A549 (cell line): ENCODE measurements at regions of chr1 and their contacts with region 1.

Region 1: GRCh38 chr1:204506961-204507387 is 9.2 kb upstream of the MDM4 start:
- DNase-seq: peak; percentile 35 to 93
- ATAC-seq: peak; percentile 79 to 87
- H3K4me3 ChIP-seq: peak overlapping the region; percentile 53
- H3K27ac ChIP-seq: peak overlapping the region; percentile 78 to 89
- H3K4me1 ChIP-seq: peaks cover 21% of the 10 kb centered on the region
- CTCF ChIP-seq: no peak
- EP300 ChIP-seq: no peak
- POLR2A ChIP-seq: no peak
- RAD21 ChIP-seq: no peak

Region 2: DNA sequence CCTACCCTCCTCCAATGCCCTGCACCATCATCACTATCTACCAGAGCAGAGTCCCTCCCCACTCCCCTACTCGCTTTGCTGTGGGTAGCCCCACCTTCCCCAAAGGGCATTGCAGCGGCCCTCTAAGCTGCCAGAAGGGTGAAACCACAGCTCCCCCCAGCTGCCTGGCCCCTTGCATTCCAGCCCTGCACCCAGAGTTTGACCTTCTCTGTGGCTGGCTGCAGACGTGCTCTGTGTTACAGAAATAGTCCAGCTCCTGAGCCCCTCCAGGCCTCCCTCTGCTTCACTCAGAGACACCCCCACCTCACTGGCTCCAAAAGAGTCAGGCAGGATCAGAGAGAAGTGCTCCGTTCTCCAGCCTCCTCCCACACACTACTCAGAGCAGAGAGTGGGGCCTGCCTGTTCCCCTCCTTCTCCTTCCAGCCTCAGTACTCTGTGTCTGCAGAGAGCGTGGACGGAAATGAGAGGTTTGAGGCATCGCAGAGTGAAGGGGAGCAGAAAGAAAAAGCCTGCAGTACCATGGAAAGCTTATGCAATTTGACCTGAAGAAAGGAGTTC is 210.5 kb before region 1 on chr1:
- CTCF ChIA-PET with region 1: no interaction called
- POLR2A ChIA-PET with region 1: no interaction called
- DNase-seq: no peak
- ATAC-seq: peak in 1 of 2 experiments; percentile 47; a peak in 3 of 6 replicates
- H3K4me3 ChIP-seq: no peak overlapping the region
- H3K27ac ChIP-seq: peak overlapping the region; percentile 35 to 78
- H3K4me1 ChIP-seq: peaks cover 42% of the 10 kb centered on the region
- CTCF ChIP-seq: no peak
- EP300 ChIP-seq: no peak
- POLR2A ChIP-seq: no peak
- RAD21 ChIP-seq: no peak; a peak in 1 of 5 replicates

Region 3: DNA sequence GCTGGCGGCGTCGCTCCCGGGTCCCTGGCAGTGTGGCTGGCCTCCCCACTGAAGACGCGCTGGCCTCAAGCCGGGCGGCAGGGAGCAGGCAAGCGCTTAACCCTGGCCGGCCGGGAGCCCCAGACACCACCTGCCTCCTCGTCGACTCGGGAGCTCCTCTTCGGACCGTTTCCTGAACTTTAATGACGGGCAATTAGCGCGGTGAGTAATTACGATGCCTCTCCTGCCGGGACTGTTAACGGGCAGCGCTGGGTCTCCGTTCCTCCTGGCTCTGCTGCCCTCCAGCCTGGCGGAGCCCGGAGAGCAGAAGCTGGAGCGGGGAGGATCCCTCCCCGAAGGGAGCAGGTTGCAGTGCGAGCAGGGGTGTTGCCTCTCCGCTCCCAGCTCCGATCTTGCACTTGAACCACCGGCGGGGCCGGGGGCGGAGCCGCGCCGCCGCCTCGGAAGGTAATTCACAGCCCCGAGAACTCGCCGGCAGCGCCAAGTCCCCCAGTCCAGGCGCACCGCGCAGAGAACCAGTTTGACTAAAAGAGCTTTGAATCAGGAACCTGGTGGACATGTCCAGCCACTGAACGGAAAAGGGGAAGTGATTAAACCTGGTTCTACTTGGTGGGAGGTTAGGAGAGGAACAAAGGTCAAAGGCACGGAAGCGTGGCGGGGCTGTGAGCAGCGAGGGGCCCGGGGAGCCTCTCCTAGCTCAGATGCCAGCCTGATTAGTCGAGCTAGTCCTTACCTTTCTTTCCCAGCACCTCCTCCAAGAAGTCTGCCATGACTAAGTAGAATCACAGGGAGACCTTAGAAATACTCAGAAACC is 129.0 kb before region 1 on chr1:
- CTCF ChIA-PET with region 1: interaction called, 22 read pairs
- POLR2A ChIA-PET with region 1: interaction called, 13 read pairs
- DNase-seq: peak; percentile 59 to 64
- ATAC-seq: peak; percentile 79 to 80
- H3K4me3 ChIP-seq: peak overlapping the region; percentile 76
- H3K27ac ChIP-seq: peak overlapping the region; percentile 94 to 95
- H3K4me1 ChIP-seq: peaks cover 33% of the 10 kb centered on the region
- CTCF ChIP-seq: no peak
- EP300 ChIP-seq: no peak
- POLR2A ChIP-seq: peak; percentile 42
- RAD21 ChIP-seq: no peak

Region 4: GRCh38 chr1:204411451-204412204 is 95.3 kb before region 1 on chr1 and contains the start of gene PPP1R15B:
- CTCF ChIA-PET with region 1: interaction called, 52 read pairs
- POLR2A ChIA-PET with region 1: no interaction called
- DNase-seq: peak; percentile 94 to 99
- ATAC-seq: peak; percentile 92 to 94
- H3K4me3 ChIP-seq: peak within 1 kb of the TSS; percentile 94
- H3K27ac ChIP-seq: peak within 1 kb of the TSS; percentile 98 to 100
- H3K4me1 ChIP-seq: peaks cover 32% of the 10 kb centered on the region
- CTCF ChIP-seq: no peak
- EP300 ChIP-seq: peak in 1 of 2 experiments; percentile 30; a peak in 1 of 5 replicates
- POLR2A ChIP-seq: peak; percentile 80
- RAD21 ChIP-seq: peak in 1 of 2 experiments; percentile 10; a peak in 1 of 5 replicates
- polyA plus RNA-seq, gene PPP1R15B: 49.1 and 51.9 TPM in 2 replicates

Region 5: GRCh38 chr1:204480515-204480914 is 26.5 kb before region 1 on chr1:
- CTCF ChIA-PET with region 1: interaction called, 41 read pairs
- POLR2A ChIA-PET with region 1: no interaction called
- DNase-seq: no peak
- ATAC-seq: no peak
- H3K4me3 ChIP-seq: no peak overlapping the region
- H3K27ac ChIP-seq: no peak overlapping the region
- H3K4me1 ChIP-seq: peaks cover 27% of the 10 kb centered on the region
- CTCF ChIP-seq: no peak
- EP300 ChIP-seq: no peak
- POLR2A ChIP-seq: no peak
- RAD21 ChIP-seq: no peak

Region 6: GRCh38 chr1:204487256-204487615 is 19.7 kb before region 1 on chr1:
- CTCF ChIA-PET with region 1: interaction called, 77 read pairs
- POLR2A ChIA-PET with region 1: no interaction called
- DNase-seq: no peak
- ATAC-seq: no peak
- H3K4me3 ChIP-seq: no peak overlapping the region
- H3K27ac ChIP-seq: no peak overlapping the region
- H3K4me1 ChIP-seq: peaks cover 28% of the 10 kb centered on the region
- CTCF ChIP-seq: no peak
- EP300 ChIP-seq: no peak
- POLR2A ChIP-seq: no peak
- RAD21 ChIP-seq: no peak

Region 7: DNA sequence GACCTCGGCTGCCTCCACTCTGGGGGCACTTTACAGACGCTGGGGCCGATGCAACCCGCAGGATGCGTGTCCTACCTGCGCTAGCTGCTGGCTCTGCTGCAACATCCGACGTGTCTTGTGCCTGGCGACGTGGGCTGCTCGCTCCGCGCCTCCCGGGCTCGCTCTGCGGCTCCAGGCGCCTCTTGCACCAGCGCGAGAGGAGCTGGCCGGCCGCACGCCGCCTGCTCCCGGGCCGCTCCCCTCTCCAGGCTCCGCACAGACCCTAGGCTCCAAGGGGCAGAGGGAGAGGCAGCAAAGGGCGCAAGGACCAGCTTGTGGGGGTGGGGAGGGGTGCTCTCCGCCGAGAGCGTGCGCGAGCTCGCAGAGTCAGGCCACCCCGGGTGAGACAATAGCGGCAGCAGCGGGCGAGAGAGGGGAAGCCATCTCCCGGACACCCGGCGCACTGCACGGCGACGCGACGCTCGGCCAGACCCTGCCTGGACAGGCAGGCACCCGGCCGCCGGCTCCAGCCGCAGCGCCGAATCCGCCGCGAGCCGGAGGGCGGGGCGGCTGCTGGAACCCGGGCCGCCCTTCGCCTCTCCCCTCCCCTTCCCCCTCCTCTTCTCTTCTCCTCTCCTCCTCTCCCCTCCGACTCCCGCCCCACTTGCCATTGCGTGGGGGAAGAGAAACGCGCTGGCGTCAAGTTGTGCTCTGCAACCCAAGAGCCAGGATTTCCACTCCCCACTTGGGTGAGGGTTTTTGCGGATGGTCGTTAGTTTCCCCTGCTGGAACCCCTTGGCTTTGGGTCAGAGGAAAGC is 12.5 kb before region 1 on chr1 and contains the start of gene PIK3C2B:
- CTCF ChIA-PET with region 1: interaction called, 77 read pairs
- POLR2A ChIA-PET with region 1: interaction called, 23 read pairs
- DNase-seq: peak; percentile 85 to 97
- ATAC-seq: peak; percentile 95 to 97
- H3K4me3 ChIP-seq: peak within 1 kb of the TSS; percentile 70
- H3K27ac ChIP-seq: peak within 1 kb of the TSS; percentile 87 to 94
- H3K4me1 ChIP-seq: peaks cover 24% of the 10 kb centered on the region; the same call in 2 of the 3 replicates
- CTCF ChIP-seq: peak; percentile 20; the same call in 2 of the 3 replicates
- EP300 ChIP-seq: no peak
- POLR2A ChIP-seq: peak; percentile 93
- RAD21 ChIP-seq: peak; percentile 26 to 55; a peak in 3 of 5 replicates
- polyA plus RNA-seq, gene PIK3C2B: 9.2 and 13.0 TPM in 2 replicates

Region 8: DNA sequence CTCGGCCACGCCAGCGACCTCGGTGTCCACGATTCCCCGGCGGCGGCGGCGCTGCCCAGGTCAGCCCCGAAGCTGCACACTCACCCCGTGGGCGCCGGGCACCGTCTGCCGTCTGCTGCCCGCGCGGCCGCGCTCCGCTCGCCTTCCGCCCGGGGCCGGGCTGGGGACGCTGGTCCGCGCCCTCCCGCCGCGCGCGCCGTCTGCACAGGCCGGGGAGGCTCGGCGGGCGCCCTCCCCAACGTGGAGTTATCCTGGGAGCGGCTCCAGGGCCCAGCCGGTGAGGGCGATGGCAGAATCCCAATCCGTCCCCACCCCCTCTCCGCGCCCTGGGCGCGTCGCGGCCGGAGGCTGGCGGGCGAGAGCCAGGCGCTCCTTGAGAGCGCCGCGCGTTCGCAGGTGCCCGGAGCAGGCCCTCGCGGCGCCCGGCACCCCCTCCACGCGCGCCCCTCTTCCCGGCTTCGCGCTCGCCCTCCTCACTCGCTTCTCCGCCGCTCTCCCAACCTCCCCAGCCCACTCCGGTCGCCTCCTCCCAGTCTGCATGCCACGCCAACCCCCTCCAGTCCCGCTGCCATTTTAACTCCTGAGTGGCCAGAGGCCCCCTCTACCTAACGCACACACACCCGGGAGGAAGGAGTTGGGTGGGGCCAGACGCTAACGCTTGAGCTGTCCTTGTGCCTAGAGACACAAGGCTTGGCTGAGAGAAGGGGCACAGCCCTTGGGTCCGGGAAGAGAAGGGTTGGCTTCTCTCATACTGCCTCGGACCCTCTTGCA is 178.4 kb after region 1 on chr1 and contains the start of gene LRRN2:
- CTCF ChIA-PET with region 1: no interaction called
- POLR2A ChIA-PET with region 1: no interaction called
- DNase-seq: peak; percentile 28 to 60
- ATAC-seq: peak; percentile 69
- H3K4me3 ChIP-seq: peak within 1 kb of the TSS; percentile 65
- H3K27ac ChIP-seq: peak within 1 kb of the TSS; percentile 82 to 98
- H3K4me1 ChIP-seq: peaks cover 14% of the 10 kb centered on the region
- CTCF ChIP-seq: no peak
- EP300 ChIP-seq: no peak
- POLR2A ChIP-seq: no peak; the same call in none of the 2 replicates
- RAD21 ChIP-seq: no peak
- polyA plus RNA-seq, gene LRRN2: 3.6 and 4.3 TPM in 2 replicates